ENCODE measurements at regions of chr2 and their contacts with region 1.

Region 1: GRCh38 chr2:73985308-73986084 is 786 bp downstream of the TET3 start:
- DNase-seq: peak in 7 of 9 experiments; percentile 45 to 83 (median 61)
- ATAC-seq: peak; percentile 33
- H3K4me3 ChIP-seq: peak overlapping the region; percentile 65 to 72
- H3K4me3 Mint-ChIP-seq: peak overlapping the region; percentile 80
- H3K27ac ChIP-seq: peak overlapping the region; percentile 37 to 71
- H3K27ac Mint-ChIP-seq: peak overlapping the region; percentile 85
- H3K4me1 ChIP-seq: peaks cover 78% of the 10 kb centered on the region
- H3K4me1 Mint-ChIP-seq: peaks cover 79% of the 10 kb centered on the region
- H3K27me3 ChIP-seq: no peaks in the 10 kb centered on the region
- H3K27me3 Mint-ChIP-seq: no peaks in the 10 kb centered on the region
- CTCF ChIP-seq: no peak

Region 2: DNA sequence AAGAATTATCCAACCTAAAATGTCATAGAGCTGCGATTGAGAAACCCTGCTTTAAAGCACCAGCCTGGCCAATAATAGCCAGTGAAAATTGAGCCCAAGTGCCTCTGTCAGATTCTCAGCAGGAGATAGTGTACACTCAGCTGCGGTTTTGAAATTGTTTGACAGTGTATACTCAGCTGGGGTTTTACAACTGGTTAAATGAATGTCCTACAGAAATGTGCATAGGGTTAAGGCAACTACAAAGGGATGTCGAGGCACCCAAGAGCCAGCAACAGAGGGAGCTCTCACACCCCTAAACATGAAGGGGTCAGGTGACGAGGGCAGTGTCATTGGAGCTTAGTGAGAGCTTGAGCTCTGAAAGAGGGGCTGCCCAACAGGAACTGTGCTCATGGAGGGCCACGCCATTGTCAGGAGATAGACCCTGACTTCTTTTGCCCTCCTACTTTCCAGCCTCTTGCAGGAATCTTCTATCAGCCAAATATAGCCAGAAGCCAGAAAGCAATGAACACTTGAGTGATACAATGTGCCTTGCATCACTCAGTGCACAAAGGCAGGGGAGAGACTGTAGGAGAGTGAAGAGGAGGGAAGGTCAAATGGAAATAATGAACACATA is 77.5 kb before region 1 on chr2:
- CTCF ChIA-PET with region 1: interaction called, 63 read pairs
- POLR2A ChIA-PET with region 1: interaction called, 4 read pairs
- intact Hi-C with region 1: loop called in 1 of 2 experiments (anchors 1 kb)
- DNase-seq: peak; percentile 19 to 79 (median 61)
- ATAC-seq: peak; percentile 90
- H3K4me3 ChIP-seq: no peak overlapping the region
- H3K4me3 Mint-ChIP-seq: no peak overlapping the region
- H3K27ac ChIP-seq: no peak overlapping the region
- H3K27ac Mint-ChIP-seq: peak overlapping the region; percentile 7
- H3K4me1 ChIP-seq: no peaks in the 10 kb centered on the region
- H3K4me1 Mint-ChIP-seq: peaks cover 3% of the 10 kb centered on the region
- H3K27me3 ChIP-seq: no peaks in the 10 kb centered on the region
- H3K27me3 Mint-ChIP-seq: no peaks in the 10 kb centered on the region
- CTCF ChIP-seq: peak; percentile 44

Region 3: GRCh38 chr2:73933194-73933593 is 52.3 kb before region 1 on chr2:
- CTCF ChIA-PET with region 1: interaction called, 10 read pairs
- POLR2A ChIA-PET with region 1: interaction called, 10 read pairs
- intact Hi-C with region 1: no loop called
- DNase-seq: no peak
- ATAC-seq: no peak
- H3K4me3 ChIP-seq: no peak overlapping the region
- H3K4me3 Mint-ChIP-seq: no peak overlapping the region
- H3K27ac ChIP-seq: no peak overlapping the region
- H3K27ac Mint-ChIP-seq: no peak overlapping the region
- H3K4me1 ChIP-seq: peaks cover 56% of the 10 kb centered on the region
- H3K4me1 Mint-ChIP-seq: peaks cover 83% of the 10 kb centered on the region
- H3K27me3 ChIP-seq: no peaks in the 10 kb centered on the region
- H3K27me3 Mint-ChIP-seq: no peaks in the 10 kb centered on the region
- CTCF ChIP-seq: no peak

Region 4: GRCh38 chr2:73944714-73945113 is 40.8 kb before region 1 on chr2:
- CTCF ChIA-PET with region 1: interaction called, 10 read pairs
- POLR2A ChIA-PET with region 1: interaction called, 3 read pairs
- intact Hi-C with region 1: loop called (anchors 1 to 5 kb)
- DNase-seq: no peak
- ATAC-seq: no peak
- H3K4me3 ChIP-seq: no peak overlapping the region
- H3K4me3 Mint-ChIP-seq: no peak overlapping the region
- H3K27ac ChIP-seq: no peak overlapping the region
- H3K27ac Mint-ChIP-seq: peak overlapping the region; percentile 53
- H3K4me1 ChIP-seq: peaks cover 53% of the 10 kb centered on the region
- H3K4me1 Mint-ChIP-seq: peaks cover 82% of the 10 kb centered on the region
- H3K27me3 ChIP-seq: no peaks in the 10 kb centered on the region
- H3K27me3 Mint-ChIP-seq: no peaks in the 10 kb centered on the region
- CTCF ChIP-seq: no peak

Region 5: DNA sequence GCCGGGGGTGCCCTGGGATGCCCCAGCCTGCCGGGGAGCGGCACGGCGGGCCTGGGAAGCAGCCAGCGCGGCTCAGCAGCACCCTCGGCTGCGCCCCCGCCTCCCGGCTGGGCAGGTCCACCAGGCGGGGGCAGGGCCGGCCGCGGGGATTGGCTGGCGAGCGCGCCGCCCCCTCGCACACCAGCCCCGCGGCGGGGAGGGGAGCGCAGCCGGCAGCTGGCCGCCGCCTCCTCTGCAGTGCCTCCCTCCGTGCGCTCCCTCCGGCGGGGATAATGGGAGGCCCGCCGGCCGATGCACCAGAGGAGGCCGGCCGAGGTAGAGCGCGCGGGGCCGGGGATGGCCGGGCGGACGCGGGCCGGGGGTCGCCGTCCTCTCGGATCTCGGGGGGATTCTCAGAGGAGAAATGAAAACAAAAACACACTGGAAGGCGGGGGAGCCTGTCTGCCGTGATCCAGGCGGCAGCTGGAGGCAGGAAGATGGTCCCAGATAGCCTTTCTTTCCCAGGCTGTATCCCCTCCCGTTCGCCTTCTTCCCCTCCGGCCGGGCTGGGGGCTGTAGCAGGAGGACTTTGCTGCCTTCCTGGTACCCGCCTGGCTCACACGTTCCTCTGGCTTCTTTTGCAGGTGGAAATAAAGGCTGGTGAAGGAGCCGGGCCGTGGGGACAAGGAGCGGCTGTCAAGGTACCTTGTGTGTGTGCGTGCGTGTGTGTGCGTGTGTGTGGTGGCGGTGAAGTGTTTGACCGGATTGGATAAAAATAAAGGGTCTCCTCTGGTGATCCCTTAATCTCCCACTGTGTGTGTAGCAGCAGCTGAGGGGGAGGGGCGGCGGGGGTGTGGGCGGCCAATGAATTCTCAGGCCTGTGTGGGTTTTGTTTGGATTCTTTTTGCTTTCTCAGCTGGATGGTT is 17.2 kb after region 1 on chr2:
- CTCF ChIA-PET with region 1: interaction called, 21 read pairs
- POLR2A ChIA-PET with region 1: interaction called, 24 read pairs
- intact Hi-C with region 1: loop called (anchors 1 kb)
- DNase-seq: peak; percentile 54 to 91 (median 79)
- ATAC-seq: peak; percentile 94
- H3K4me3 ChIP-seq: peak overlapping the region; percentile 50 to 52
- H3K4me3 Mint-ChIP-seq: peak overlapping the region; percentile 88
- H3K27ac ChIP-seq: peak overlapping the region in 1 of 2 experiments; percentile 66
- H3K27ac Mint-ChIP-seq: peak overlapping the region; percentile 69
- H3K4me1 ChIP-seq: peaks cover 36% of the 10 kb centered on the region
- H3K4me1 Mint-ChIP-seq: peaks cover 76% of the 10 kb centered on the region
- H3K27me3 ChIP-seq: no peaks in the 10 kb centered on the region
- H3K27me3 Mint-ChIP-seq: no peaks in the 10 kb centered on the region
- CTCF ChIP-seq: no peak

Region 6: DNA sequence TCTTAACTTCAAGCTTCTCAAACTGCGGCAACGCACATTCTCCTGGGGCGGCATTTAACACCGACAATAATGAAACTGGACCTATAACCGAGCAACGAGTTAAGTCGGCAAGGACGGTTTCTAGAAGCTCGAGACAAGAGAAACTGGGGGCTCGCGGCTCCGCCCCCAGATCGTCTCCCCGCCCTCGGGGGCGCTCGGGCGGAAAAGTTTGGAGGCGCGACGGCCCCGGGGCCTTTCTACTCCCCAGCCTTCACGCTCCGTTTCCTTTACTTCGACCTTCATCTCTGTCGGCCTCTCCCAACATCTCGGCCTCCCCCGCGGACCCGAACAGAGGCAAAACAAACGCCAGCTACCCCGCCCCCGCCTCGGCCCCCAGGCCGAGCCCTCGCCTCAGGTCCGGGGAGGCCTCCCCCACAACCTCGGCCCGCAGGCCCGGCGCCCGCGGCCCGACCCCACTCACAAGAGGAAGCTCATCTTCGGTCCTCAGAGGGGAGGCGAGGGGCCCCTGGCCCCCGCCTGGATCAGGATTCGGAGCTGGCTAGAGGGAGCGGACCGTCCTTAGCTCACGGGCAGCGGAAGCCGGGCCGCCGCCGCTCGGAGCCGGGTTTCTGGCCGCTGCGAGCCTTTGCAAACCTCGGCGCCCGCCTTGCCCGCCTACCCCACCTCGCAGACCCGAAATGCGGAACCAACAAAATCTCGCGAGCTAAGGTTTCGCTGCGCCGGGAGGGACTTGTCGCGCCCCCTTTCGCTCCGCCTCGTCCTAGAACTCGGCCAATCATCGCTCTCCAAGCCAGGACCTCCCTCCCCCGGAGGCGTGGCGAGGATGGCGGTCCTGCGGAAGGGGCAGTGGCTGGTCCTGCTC is 192.9 kb after region 1 on chr2 and contains the start of gene MOB1A:
- CTCF ChIA-PET with region 1: no interaction called
- POLR2A ChIA-PET with region 1: interaction called, 3 read pairs
- intact Hi-C with region 1: loop called in 1 of 2 experiments (anchors 2 kb)
- DNase-seq: peak; percentile 96 to 99 (median 98)
- ATAC-seq: peak; percentile 95
- H3K4me3 ChIP-seq: peak within 1 kb of the TSS; percentile 79 to 93
- H3K4me3 Mint-ChIP-seq: peak within 1 kb of the TSS; percentile 92
- H3K27ac ChIP-seq: peak within 1 kb of the TSS; percentile 95
- H3K27ac Mint-ChIP-seq: peak within 1 kb of the TSS; percentile 92
- H3K4me1 ChIP-seq: peaks cover 40% of the 10 kb centered on the region
- H3K4me1 Mint-ChIP-seq: peaks cover 36% of the 10 kb centered on the region
- H3K27me3 ChIP-seq: no peaks in the 10 kb centered on the region
- H3K27me3 Mint-ChIP-seq: no peaks in the 10 kb centered on the region
- CTCF ChIP-seq: no peak
- total RNA-seq, gene MOB1A: 181 to 197 TPM

Measured in CD8-positive, alpha-beta T cell (primary cell).